PC-3 (cell line): ENCODE measurements at regions of chr5 and their contacts with region 1.

Region 1: DNA sequence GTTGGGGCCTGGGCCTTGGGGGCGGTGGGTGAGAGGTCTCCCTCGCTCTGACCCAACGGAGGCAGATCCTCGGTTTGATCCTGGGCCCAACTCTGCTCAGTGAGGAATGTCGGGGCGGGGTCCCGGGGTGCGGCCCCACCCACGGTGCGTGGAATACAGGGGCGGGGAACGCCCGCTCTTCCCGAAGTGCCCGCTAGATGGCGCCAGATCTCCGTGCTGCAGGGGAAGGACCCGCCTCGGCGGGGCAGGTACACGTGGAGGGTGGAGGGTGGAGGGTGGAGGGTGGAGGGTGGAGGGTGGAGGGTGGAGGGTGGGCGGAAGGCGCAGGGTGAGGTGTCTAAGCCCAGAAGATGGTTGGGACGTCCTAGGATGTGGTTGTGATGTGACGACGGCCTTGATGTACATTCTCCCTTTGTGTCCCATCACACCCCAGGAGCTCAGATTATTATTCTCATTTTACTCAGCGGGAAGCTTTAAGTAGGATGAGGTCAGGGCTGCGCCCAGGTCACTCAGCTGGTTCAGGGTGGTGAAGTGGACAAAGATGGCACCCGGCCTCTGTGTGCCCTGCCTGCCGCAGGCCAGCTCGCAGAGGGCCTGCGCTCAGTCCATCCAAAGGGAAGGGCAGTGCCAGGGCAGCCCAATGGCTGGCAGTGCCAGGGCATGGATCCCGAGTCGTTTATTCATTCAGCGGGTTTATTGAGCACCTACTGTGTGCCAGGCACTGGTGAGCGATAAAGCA is 9.4 kb upstream of the RPS14 start:
- DNase-seq: peak; percentile 90
- ATAC-seq: peak; percentile 95
- H3K4me3 ChIP-seq: no peak overlapping the region
- H3K27ac ChIP-seq: no peak overlapping the region
- H3K4me1 ChIP-seq: no peaks in the 10 kb centered on the region; the same call in 1 of the 2 replicates
- H3K27me3 ChIP-seq: no peaks in the 10 kb centered on the region
- CTCF ChIP-seq: peak; percentile 60

Region 2: DNA sequence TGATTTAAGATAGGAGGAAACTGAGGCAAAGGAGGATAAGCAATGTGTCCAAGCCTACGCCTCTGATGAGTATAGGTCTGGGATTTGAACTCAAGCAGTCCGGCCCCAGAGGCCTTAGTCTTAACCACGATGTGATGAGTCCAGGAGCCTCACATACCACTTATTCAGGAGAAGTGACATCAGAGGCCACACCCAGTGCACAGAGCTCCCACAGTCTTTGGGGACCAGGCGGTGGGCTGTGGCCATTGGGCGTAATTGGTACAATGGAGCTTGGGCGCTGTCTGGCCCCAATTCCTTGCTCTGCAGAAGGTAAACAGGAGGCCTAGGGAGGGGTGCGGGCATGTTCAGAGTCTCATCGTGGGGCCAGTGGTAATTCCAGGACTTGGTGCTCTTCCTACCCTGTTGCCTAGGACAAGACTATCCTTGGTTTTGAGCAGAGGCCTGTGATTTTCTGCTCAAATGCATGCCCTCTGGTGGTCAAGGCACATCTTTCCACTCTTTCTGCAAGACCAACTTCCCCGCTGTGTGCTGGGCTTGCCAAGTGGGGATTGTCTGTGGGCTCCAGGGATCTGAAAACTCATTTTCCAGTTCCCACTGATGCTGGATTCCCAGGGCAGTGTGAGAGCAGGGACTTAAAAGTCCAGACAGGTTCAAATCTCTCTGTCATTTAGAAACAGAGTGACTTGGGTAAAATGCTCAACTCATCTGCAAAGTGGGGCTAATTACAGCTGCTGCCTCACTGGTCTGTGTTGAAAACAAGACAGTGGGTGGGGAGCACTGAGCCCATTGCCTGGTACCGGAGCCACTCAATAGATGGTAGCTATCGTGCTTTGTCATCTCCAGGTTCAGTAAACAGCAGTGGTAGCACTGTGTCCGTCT is 64.7 kb after region 1 on chr5:
- CTCF ChIA-PET with region 1: interaction called, 7 read pairs
- POLR2A ChIA-PET with region 1: no interaction called
- intact Hi-C with region 1: loop called (anchors 1 kb)
- DNase-seq: peak; percentile 69
- ATAC-seq: peak; percentile 93
- H3K4me3 ChIP-seq: no peak overlapping the region
- H3K27ac ChIP-seq: no peak overlapping the region
- H3K4me1 ChIP-seq: no peaks in the 10 kb centered on the region
- H3K27me3 ChIP-seq: no peaks in the 10 kb centered on the region
- CTCF ChIP-seq: peak; percentile 81

Region 3: DNA sequence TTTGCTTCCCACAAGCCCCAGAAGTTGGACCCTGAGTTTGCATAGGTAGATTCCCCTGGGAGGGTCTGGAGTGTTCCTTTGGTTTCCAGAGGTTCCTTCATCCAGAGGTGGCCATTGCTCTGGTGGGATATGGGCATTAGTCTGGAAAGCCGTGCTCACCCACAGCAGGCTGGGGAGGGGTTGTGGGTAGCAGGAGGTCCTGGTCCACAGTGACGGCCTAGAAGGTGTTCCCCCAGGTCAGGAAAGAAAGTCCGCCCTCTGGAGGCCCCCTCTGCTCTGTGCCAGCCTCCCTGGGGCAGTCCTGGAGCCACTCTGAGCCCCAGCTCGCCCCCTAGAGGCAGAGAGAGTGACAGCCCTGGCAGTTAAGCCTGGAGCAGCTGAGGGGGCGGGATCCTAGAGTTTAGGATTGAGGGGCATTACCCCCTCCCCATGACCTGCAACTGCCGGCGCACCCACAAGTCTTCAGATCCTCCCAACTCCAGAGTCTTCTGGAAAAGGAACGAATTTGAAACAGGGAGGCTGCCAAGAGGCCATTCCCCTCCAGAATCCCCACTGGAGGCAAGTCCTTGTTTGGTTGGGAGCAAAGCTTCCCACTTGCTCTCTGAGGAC is 85.7 kb after region 1 on chr5:
- CTCF ChIA-PET with region 1: no interaction called
- POLR2A ChIA-PET with region 1: no interaction called
- intact Hi-C with region 1: loop called (anchors 2 kb)
- DNase-seq: peak; percentile 70
- ATAC-seq: peak; percentile 84
- H3K4me3 ChIP-seq: no peak overlapping the region
- H3K27ac ChIP-seq: no peak overlapping the region
- H3K4me1 ChIP-seq: peaks cover 14% of the 10 kb centered on the region
- H3K27me3 ChIP-seq: no peaks in the 10 kb centered on the region
- CTCF ChIP-seq: peak; percentile 95

Region 4: DNA sequence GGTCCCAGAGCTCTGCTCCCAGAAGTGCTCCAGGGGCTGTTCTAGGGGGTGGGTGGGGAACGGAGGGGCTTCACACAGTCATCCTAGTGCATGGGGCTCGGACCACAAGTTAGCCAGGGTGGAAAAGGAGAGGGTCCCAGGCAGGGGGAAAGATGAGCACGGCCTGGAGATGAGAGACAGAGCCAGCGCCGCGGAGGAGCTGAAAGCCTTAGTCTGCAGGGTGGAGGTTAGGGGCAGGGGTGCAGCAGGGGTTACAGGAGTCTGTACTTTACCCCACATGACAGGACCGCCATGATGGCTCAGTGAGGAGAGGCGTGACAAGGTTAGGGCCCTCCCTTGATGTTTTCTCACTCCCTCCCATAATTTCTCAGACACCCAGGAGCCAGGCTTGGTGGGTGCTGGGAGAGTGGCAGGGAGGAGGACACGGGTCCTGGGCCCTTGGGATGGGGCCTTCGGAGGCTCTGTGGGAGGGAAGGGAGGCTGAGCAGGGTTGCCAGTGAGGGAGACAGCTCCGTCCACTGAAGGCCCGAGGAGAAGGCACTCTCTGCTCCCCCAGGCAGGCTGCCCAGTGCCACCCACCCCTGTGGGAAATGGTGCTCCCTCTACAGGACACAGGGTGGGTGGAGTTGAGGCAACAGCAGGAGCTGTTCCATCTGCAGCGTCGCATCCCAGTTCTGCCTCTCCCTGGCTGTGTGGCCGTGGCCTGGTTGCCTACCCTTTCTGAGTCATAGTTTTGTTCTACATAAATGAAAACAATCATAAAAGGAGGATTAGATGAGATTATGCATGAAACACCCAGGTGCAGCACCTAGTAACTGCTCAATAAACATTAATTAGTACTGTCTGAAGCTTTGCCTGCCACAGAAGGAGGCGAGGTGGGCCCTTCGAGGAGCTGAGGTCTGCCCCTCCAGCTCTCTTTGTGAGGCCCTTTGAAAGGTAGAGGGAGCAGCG is 115.2 kb after region 1 on chr5:
- CTCF ChIA-PET with region 1: no interaction called
- POLR2A ChIA-PET with region 1: no interaction called
- intact Hi-C with region 1: no loop called
- DNase-seq: no peak
- ATAC-seq: no peak; the same call in 1 of the 2 replicates
- H3K4me3 ChIP-seq: no peak overlapping the region
- H3K27ac ChIP-seq: no peak overlapping the region
- H3K4me1 ChIP-seq: no peaks in the 10 kb centered on the region
- H3K27me3 ChIP-seq: no peaks in the 10 kb centered on the region; the same call in 1 of the 2 replicates
- CTCF ChIP-seq: peak; percentile 29; the same call in 1 of the 2 replicates

Region 5: DNA sequence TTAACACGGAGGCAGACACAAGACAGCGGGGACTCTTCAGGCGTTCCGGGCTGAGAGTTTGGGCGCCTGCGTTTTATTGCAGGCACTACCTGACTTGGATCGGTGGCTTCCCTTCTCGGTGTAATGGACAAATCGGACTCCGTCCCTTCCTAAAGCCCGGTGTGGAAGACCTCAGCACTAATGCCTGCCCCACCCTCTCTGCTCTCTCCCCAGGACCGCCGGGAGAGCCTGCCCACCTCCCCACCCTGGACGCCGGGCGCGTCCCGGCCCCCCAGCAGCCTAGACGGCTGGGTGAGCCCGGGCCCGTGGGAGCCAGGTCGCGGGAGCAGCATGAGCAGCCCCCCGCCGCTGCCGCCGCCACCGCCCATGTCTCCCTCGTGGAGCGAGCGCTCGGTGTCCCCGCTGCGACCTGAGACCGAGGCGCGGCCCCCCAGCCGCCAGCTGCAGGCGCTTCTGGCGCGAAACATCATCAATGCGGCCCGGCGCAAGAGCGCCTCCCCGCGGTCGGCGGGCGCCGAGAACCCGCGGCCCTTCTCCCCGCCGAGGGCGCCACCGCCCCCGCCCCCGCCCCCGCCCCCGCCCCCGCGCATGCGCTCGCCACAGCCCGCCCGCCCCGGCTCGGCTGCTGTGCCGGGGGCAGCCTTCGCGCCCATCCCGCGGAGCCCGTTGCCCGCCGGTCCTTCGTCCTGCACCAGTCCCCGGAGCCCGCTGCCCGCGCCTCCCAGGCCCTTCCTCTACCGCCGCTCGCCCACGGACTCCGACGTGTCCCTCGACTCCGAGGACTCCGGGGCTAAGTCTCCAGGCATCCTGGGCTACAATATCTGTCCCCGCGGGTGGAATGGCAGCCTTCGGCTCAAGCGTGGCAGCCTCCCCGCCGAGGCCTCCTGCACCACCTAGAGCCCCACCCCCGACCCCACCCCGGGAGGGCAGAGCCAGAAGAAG is 197.5 kb after region 1 on chr5:
- CTCF ChIA-PET with region 1: no interaction called
- POLR2A ChIA-PET with region 1: no interaction called
- intact Hi-C with region 1: loop called (anchors 2 kb)
- DNase-seq: peak; percentile 78
- ATAC-seq: peak; percentile 76
- H3K4me3 ChIP-seq: peak overlapping the region; percentile 73
- H3K27ac ChIP-seq: no peak overlapping the region
- H3K4me1 ChIP-seq: peaks cover 6% of the 10 kb centered on the region; the same call in 1 of the 2 replicates
- H3K27me3 ChIP-seq: no peaks in the 10 kb centered on the region
- CTCF ChIP-seq: peak; percentile 56